B cell (primary cell): ENCODE measurements at regions of chr4 and their contacts with region 1.

Region 1: GRCh38 chr4:85498068-85498733 is 23.3 kb downstream of the ARHGAP24 start:
- DNase-seq: peak; percentile 82
- ATAC-seq: peak; percentile 97
- H3K4me3 ChIP-seq: peak overlapping the region in 1 of 5 experiments; percentile 34
- H3K4me3 Mint-ChIP-seq: peak overlapping the region; percentile 66
- H3K27ac ChIP-seq: peak overlapping the region; percentile 67 to 91
- H3K27ac Mint-ChIP-seq: peak overlapping the region; percentile 89
- H3K4me1 ChIP-seq: peaks cover 36 to 45% of the 10 kb centered on the region in 2 donors
- H3K4me1 Mint-ChIP-seq: peaks cover 63% of the 10 kb centered on the region
- H3K27me3 ChIP-seq: no peaks in the 10 kb centered on the region
- H3K27me3 Mint-ChIP-seq: no peaks in the 10 kb centered on the region
- CTCF ChIP-seq: no peak

Region 2: GRCh38 chr4:85514117-85514516 is 15.9 kb after region 1 on chr4:
- CTCF ChIA-PET with region 1: interaction called, 3 read pairs
- POLR2A ChIA-PET with region 1: no interaction called
- intact Hi-C with region 1: loop called (anchors 2 kb)
- DNase-seq: no peak
- ATAC-seq: no peak
- H3K4me3 ChIP-seq: peak overlapping the region in 1 of 5 experiments; percentile 26
- H3K4me3 Mint-ChIP-seq: peak overlapping the region; percentile 56
- H3K27ac ChIP-seq: no peak overlapping the region
- H3K27ac Mint-ChIP-seq: peak overlapping the region; percentile 39
- H3K4me1 ChIP-seq: peaks cover 24 to 31% of the 10 kb centered on the region in 2 donors
- H3K4me1 Mint-ChIP-seq: peaks cover 35% of the 10 kb centered on the region
- H3K27me3 ChIP-seq: no peaks in the 10 kb centered on the region
- H3K27me3 Mint-ChIP-seq: no peaks in the 10 kb centered on the region
- CTCF ChIP-seq: no peak